Mammary epithelial cell (primary cell): ENCODE measurements at regions of chr12 and their contacts with region 1.

Region 1: GRCh38 chr12:51270067-51270970 is at the start of gene SMAGP:
- DNase-seq: peak; percentile 69
- H3K4me3 ChIP-seq: peak within 1 kb of the TSS; percentile 49 to 68 (median 55)
- H3K27ac ChIP-seq: peak within 1 kb of the TSS; percentile 80
- H3K4me1 ChIP-seq: peaks cover 17% of the 10 kb centered on the region
- H3K27me3 ChIP-seq: no peaks in the 10 kb centered on the region
- CTCF ChIP-seq: no peak
- total RNA-seq, gene SMAGP: 21.2 to 34.3 TPM

Region 2: DNA sequence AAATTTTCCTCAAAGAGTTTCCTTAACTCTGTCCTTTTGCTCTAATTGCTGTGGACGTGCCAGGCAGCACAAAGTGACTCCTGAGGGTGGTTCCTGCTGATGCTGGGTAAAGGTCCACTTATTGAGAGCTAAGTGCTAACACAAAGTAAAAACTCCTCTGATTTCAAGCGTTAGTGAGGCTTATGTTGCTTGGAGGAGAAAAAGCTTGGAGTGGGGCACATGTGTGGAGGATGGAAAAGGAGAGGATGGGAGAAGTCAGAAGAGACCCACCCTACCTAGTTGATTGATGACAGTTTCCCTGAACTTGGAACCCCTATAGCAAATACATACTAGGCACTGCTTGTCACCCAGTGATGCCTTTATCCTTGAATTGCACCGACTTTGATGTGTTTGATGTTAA is 234.0 kb before region 1 on chr12:
- CTCF ChIA-PET with region 1: no interaction called
- dilution Hi-C with region 1: no loop called
- in situ Hi-C with region 1: no loop called
- intact Hi-C with region 1: no loop called
- DNase-seq: no peak
- H3K4me3 ChIP-seq: no peak overlapping the region
- H3K27ac ChIP-seq: no peak overlapping the region
- H3K4me1 ChIP-seq: peaks cover 9% of the 10 kb centered on the region
- H3K27me3 ChIP-seq: no peaks in the 10 kb centered on the region
- CTCF ChIP-seq: no peak

Region 3: GRCh38 chr12:51225771-51226170 is 44.5 kb before region 1 on chr12:
- CTCF ChIA-PET with region 1: no interaction called
- dilution Hi-C with region 1: no loop called
- in situ Hi-C with region 1: no loop called
- intact Hi-C with region 1: no loop called
- DNase-seq: no peak
- H3K4me3 ChIP-seq: no peak overlapping the region
- H3K27ac ChIP-seq: no peak overlapping the region
- H3K4me1 ChIP-seq: no peaks in the 10 kb centered on the region
- H3K27me3 ChIP-seq: no peaks in the 10 kb centered on the region
- CTCF ChIP-seq: no peak

Region 4: GRCh38 chr12:51326762-51327439 is 56.6 kb after region 1 on chr12:
- CTCF ChIA-PET with region 1: no interaction called
- dilution Hi-C with region 1: no loop called
- in situ Hi-C with region 1: no loop called
- intact Hi-C with region 1: loop called (anchors 5 kb)
- DNase-seq: peak; percentile 61
- H3K4me3 ChIP-seq: no peak overlapping the region
- H3K27ac ChIP-seq: peak overlapping the region; percentile 32
- H3K4me1 ChIP-seq: peaks cover 13% of the 10 kb centered on the region
- H3K27me3 ChIP-seq: no peaks in the 10 kb centered on the region
- CTCF ChIP-seq: no peak

Region 5: DNA sequence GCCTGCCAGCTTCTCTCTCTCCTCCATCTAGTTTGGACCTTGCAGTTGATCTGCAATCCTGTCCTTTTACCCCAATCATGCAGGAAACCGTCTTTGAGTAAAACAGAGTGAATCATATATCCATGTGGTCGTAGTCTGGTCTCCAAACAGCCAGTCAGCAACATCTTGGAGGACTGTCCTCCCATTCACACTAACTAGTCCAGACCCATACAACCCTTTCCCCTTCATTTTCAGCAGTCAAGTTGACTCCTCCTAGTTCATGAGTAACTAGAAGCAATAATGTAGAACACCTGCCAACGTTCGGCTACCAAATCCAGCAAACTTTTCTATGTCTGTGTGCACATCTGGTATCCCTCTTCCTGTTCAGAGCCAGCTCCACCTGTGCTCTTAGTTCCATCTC is 64.4 kb after region 1 on chr12:
- CTCF ChIA-PET with region 1: no interaction called
- dilution Hi-C with region 1: no loop called
- in situ Hi-C with region 1: loop called (anchors 5 kb)
- intact Hi-C with region 1: loop called (anchors 5 kb)
- DNase-seq: no peak
- H3K4me3 ChIP-seq: no peak overlapping the region
- H3K27ac ChIP-seq: no peak overlapping the region
- H3K4me1 ChIP-seq: no peaks in the 10 kb centered on the region
- H3K27me3 ChIP-seq: no peaks in the 10 kb centered on the region
- CTCF ChIP-seq: no peak

Region 6: GRCh38 chr12:51341259-51342007 is 71.1 kb after region 1 on chr12:
- CTCF ChIA-PET with region 1: interaction called, 10 read pairs
- dilution Hi-C with region 1: no loop called
- in situ Hi-C with region 1: loop called (anchors 5 kb)
- intact Hi-C with region 1: loop called (anchors 1 kb)
- DNase-seq: peak; percentile 48
- H3K4me3 ChIP-seq: no peak overlapping the region
- H3K27ac ChIP-seq: no peak overlapping the region
- H3K4me1 ChIP-seq: peaks cover 2% of the 10 kb centered on the region
- H3K27me3 ChIP-seq: no peaks in the 10 kb centered on the region
- CTCF ChIP-seq: peak; percentile 99 to 100

Region 7: GRCh38 chr12:51361161-51362016 is 91.1 kb after region 1 on chr12:
- CTCF ChIA-PET with region 1: no interaction called
- dilution Hi-C with region 1: loop called (anchors 5 kb)
- in situ Hi-C with region 1: no loop called
- intact Hi-C with region 1: no loop called
- DNase-seq: no peak
- H3K4me3 ChIP-seq: no peak overlapping the region
- H3K27ac ChIP-seq: no peak overlapping the region
- H3K4me1 ChIP-seq: no peaks in the 10 kb centered on the region
- H3K27me3 ChIP-seq: no peaks in the 10 kb centered on the region
- CTCF ChIP-seq: no peak